CD4-positive, alpha-beta T cell (primary cell): ENCODE measurements at regions of chr18 and their contacts with region 1.

Region 1: DNA sequence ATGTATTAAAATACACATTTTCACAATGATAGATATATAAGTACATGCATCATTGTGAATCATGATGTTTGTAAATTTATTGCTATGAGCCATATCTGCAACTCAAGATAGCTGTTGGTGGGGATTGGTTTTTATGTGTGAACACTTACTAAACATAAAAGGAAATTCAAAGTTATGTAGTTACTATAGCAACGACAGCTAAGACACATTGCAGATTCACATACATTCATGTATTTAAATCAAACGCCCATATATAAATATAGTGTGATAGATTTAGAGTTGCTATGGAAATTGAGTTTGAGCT is 65.6 kb downstream of the MAPRE2 start:
- DNase-seq: peak in 3 of 14 experiments; percentile 43 to 52 (median 44)
- ATAC-seq: peak; percentile 72
- H3K4me3 ChIP-seq: no peak overlapping the region
- H3K4me3 Mint-ChIP-seq: peak overlapping the region; percentile 30
- H3K27ac ChIP-seq: peak overlapping the region in 1 of 2 donors; percentile 18
- H3K27ac Mint-ChIP-seq: peak overlapping the region; percentile 74
- H3K4me1 ChIP-seq: no peaks in the 10 kb centered on the region
- H3K4me1 Mint-ChIP-seq: peaks cover 10% of the 10 kb centered on the region
- H3K27me3 ChIP-seq: no peaks in the 10 kb centered on the region
- H3K27me3 Mint-ChIP-seq: no peaks in the 10 kb centered on the region
- CTCF ChIP-seq: no peak

Region 2: DNA sequence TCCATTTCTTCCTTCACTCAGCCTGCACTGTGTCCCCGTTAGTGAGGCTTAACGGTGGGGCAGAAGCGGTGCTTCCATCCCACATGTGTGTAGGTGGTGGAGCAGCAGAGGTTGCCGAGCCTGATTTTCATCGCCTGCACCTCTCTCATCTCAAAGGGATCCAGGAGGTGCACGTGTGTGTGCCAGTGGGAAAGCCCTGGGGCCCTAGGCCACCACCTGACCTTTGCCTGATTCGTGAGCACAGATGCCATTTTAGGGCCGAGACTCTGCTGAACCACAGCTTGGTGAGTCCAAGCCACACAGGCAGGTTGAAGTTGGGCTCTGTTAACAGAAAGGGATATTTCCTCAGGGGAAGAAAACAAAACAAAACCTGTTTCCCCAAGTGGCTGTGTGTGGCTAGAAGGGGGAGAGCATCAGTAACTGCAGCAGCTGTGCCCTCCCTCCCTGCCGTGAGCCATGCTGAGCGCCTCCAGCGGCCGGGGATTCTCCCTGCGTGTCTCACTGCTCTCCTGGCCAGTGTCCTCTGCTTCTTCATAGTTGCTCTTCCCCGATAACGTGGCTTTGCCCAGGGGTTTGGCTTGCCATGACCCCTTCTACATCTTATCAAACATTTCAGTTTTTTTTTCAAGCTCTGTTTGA is 15.9 kb after region 1 on chr18:
- CTCF ChIA-PET with region 1: no interaction called
- POLR2A ChIA-PET with region 1: interaction called, 3 read pairs
- intact Hi-C with region 1: loop called in 1 of 2 experiments (anchors 2 kb)
- DNase-seq: peak in 3 of 14 experiments; percentile 35 to 45 (median 45)
- ATAC-seq: peak; percentile 65
- H3K4me3 ChIP-seq: no peak overlapping the region
- H3K4me3 Mint-ChIP-seq: no peak overlapping the region
- H3K27ac ChIP-seq: no peak overlapping the region
- H3K27ac Mint-ChIP-seq: peak overlapping the region; percentile 39
- H3K4me1 ChIP-seq: peaks cover 14% of the 10 kb centered on the region
- H3K4me1 Mint-ChIP-seq: peaks cover 70% of the 10 kb centered on the region
- H3K27me3 ChIP-seq: no peaks in the 10 kb centered on the region
- H3K27me3 Mint-ChIP-seq: no peaks in the 10 kb centered on the region
- CTCF ChIP-seq: no peak